Left lung (tissue), 14 donors: ENCODE measurements at regions of chr7 and their contacts with region 1.

Region 1: GRCh38 chr7:114865564-114865963 is 56.3 kb upstream of the MDFIC start:
- DNase-seq: peak in 3 of 4 donors; percentile 35 to 49 (median 48)
- ATAC-seq: peak; percentile 93
- H3K4me3 ChIP-seq: no peak overlapping the region
- H3K27ac ChIP-seq: no peak overlapping the region
- H3K4me1 ChIP-seq: no peaks in the 10 kb centered on the region
- H3K27me3 ChIP-seq: no peaks in the 10 kb centered on the region
- CTCF ChIP-seq: peak; percentile 73 to 81

Region 2: GRCh38 chr7:114598946-114599345 is 266.6 kb before region 1 on chr7:
- intact Hi-C with region 1: no loop called
- DNase-seq: no peak
- ATAC-seq: no peak
- H3K4me3 ChIP-seq: no peak overlapping the region
- H3K27ac ChIP-seq: no peak overlapping the region
- H3K4me1 ChIP-seq: no peaks in the 10 kb centered on the region
- H3K27me3 ChIP-seq: no peaks in the 10 kb centered on the region
- CTCF ChIP-seq: no peak

Region 3: GRCh38 chr7:114755856-114756255 is 109.7 kb before region 1 on chr7:
- intact Hi-C with region 1: no loop called
- DNase-seq: peak in 2 of 4 donors; percentile 20 to 26
- ATAC-seq: no peak
- H3K4me3 ChIP-seq: no peak overlapping the region
- H3K27ac ChIP-seq: no peak overlapping the region
- H3K4me1 ChIP-seq: no peaks in the 10 kb centered on the region
- H3K27me3 ChIP-seq: no peaks in the 10 kb centered on the region
- CTCF ChIP-seq: no peak

Region 4: GRCh38 chr7:115217373-115217772 is 351.8 kb after region 1 on chr7:
- intact Hi-C with region 1: loop called in 1 of 2 experiments (anchors 10 kb)
- DNase-seq: no peak
- ATAC-seq: peak; percentile 74
- H3K4me3 ChIP-seq: no peak overlapping the region
- H3K27ac ChIP-seq: peak overlapping the region in 1 of 2 donors; percentile 41
- H3K4me1 ChIP-seq: no peaks in the 10 kb centered on the region
- H3K27me3 ChIP-seq: no peaks in the 10 kb centered on the region
- CTCF ChIP-seq: no peak